IMR-90 (cell line): ENCODE measurements at regions of chr1 and their contacts with region 1.

Region 1: DNA sequence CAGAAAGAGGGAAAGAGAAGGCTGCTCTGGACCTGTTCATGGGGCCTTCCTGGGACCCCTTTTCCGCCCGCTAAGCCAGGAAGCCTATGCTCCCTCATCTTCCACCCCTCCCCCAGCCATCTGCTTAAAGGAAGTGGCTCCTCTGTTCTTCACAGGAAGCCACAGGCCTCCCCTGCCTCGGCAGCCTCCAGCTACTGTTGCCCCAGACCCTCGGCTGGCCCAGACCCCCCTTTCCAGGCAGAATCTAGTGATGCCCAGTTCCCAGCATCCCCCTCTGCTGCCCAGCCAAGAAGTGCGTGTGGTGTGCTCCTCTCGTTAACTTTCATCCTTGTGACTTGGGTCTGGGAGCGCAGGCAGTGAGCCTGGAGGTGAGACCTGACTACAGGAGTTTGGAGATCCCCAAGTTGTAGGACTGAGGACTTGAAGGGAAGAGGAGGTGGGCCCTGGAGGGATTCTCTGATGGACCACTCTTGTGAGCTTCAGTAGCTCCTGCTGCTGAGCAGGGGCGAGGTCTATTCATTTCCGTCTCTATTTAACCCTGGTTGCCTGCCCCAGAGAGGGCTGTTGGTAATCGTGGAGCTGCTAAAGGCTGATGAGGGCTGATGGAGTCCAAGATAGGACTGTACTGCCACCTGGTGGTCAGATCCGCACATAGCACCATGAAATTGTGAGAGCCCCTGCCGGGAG is 9.1 kb downstream of the IFI6 start:
- DNase-seq: peak; percentile 76
- ATAC-seq: peak; percentile 86
- H3K4me3 ChIP-seq: no peak overlapping the region
- H3K27ac ChIP-seq: 0 out of 2 replicates have a peak overlapping the region, but pooled peaks have one; percentile 2
- H3K4me1 ChIP-seq: peaks cover 14% of the 10 kb centered on the region
- H3K27me3 ChIP-seq: no peaks in the 10 kb centered on the region
- CTCF ChIP-seq: peak; percentile 92
- POLR2A ChIP-seq: 0 out of 2 replicates have a peak, but pooled peaks have one; percentile 32
- RAD21 ChIP-seq: peak; percentile 89

Region 2: DNA sequence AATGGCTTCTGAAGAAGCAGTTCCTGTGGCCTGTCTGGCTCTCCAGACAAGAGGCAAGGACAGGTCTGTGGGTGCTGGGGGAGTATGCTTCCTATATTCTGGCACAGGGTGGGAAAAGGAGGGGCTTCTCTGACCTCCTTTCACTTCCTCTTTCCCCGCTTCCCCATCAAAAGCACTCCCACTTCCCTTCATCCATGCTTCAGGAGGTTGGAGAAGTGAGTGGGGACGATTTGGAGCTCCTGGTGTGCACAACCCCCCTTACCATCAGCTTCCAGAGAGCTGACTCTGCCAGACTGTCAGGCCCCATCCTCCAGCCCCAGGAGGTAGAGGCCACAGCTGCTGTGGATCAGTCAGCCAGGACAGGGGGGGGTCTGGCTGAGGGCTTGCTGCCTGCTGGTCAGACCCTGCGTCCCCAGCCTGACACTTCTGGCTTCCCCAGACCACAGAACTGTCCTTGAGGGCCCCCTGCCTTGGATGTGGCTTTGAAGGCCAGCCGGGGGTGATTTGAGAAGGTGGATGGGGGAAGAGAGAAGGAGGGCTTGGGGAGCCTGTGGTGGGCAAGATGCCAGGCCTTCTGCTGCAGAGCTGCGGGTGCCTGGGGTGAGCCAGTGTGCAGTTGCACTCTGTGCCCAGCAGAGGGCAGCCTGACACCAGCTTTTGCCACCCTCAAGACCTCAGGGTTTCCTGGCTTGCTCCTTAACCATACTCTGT is 362.4 kb before region 1 on chr1:
- CTCF ChIA-PET with region 1: interaction called, 6 read pairs
- POLR2A ChIA-PET with region 1: no interaction called
- dilution Hi-C with region 1: no loop called
- in situ Hi-C with region 1: no loop called
- intact Hi-C with region 1: loop called (anchors 2 kb)
- DNase-seq: peak; percentile 93
- ATAC-seq: peak; percentile 76
- H3K4me3 ChIP-seq: no peak overlapping the region
- H3K27ac ChIP-seq: peak overlapping the region; percentile 95
- H3K4me1 ChIP-seq: peaks cover 27% of the 10 kb centered on the region
- H3K27me3 ChIP-seq: no peaks in the 10 kb centered on the region
- CTCF ChIP-seq: peak; percentile 98
- POLR2A ChIP-seq: peak; percentile 49; the same call in 1 of the 2 replicates
- RAD21 ChIP-seq: peak; percentile 98

Region 3: DNA sequence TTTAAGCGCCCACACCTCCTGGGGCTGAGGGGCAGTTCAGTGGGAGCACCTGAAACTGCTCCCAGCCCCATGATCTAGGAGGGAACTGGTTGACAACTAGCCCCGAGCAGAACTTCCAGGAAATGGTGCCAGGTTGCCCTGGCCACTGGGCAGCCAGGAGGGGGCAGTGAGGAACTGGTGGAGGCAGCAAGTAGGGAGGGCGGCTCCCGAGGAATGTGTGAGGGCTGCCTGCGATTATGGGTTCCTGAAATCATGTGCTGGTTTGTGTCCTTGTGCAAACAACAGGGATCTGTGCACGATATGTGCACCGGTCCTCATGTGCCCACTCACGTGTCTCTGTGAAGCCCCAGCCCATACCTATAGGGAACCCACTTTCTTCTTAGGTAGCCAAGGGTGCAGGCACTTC is 260.5 kb before region 1 on chr1:
- CTCF ChIA-PET with region 1: no interaction called
- POLR2A ChIA-PET with region 1: no interaction called
- dilution Hi-C with region 1: no loop called
- in situ Hi-C with region 1: no loop called
- intact Hi-C with region 1: no loop called
- DNase-seq: peak; percentile 55
- ATAC-seq: peak; percentile 52
- H3K4me3 ChIP-seq: no peak overlapping the region
- H3K27ac ChIP-seq: no peak overlapping the region
- H3K4me1 ChIP-seq: peaks cover 19% of the 10 kb centered on the region
- H3K27me3 ChIP-seq: no peaks in the 10 kb centered on the region
- CTCF ChIP-seq: peak; percentile 60
- POLR2A ChIP-seq: no peak
- RAD21 ChIP-seq: peak; percentile 65

Region 4: DNA sequence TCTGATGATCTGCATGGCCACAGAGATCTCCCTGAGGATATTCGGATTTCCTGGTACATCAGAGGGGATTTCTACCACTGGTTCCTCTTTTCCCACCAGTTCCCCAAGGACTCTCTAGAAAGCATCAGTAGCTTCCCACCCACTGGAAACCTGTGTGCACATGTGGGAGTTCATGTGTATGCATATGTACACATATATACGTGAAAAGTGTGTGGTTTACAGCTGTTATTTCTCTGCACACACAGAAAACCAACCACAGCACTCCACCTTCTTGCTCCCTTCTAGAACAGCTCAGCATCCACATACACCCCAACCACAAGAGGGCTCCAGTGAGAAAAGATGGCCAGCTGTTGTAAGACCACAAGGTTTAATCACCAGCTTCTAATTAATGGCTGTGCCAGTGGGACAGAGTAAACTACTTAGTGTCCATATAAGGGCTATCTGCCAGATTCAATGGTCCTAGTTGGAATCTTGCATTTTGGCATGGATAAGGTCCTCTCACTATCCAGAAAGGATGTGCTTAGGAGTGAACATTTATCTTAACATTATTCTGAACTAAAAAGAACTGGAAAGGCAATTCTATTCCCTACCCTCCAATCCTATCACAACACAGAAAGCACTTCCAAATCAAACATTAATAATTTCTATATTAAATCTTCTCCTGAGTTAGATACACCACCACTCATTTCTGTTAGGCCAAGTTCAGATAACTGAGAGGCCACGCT is 246.3 kb before region 1 on chr1:
- CTCF ChIA-PET with region 1: no interaction called
- POLR2A ChIA-PET with region 1: no interaction called
- dilution Hi-C with region 1: no loop called
- in situ Hi-C with region 1: loop called (anchors 10 kb)
- intact Hi-C with region 1: no loop called
- DNase-seq: peak; percentile 73
- ATAC-seq: peak; percentile 55
- H3K4me3 ChIP-seq: no peak overlapping the region
- H3K27ac ChIP-seq: no peak overlapping the region
- H3K4me1 ChIP-seq: peaks cover 11% of the 10 kb centered on the region
- H3K27me3 ChIP-seq: no peaks in the 10 kb centered on the region
- CTCF ChIP-seq: peak; percentile 65
- POLR2A ChIP-seq: no peak; the same call in 1 of the 2 replicates
- RAD21 ChIP-seq: peak; percentile 67

Region 5: GRCh38 chr1:27603681-27604578 is 58.9 kb before region 1 on chr1 and contains the start of gene AHDC1:
- CTCF ChIA-PET with region 1: interaction called, 10 read pairs
- POLR2A ChIA-PET with region 1: interaction called, 3 read pairs
- dilution Hi-C with region 1: no loop called
- in situ Hi-C with region 1: no loop called
- intact Hi-C with region 1: loop called (anchors 1 kb)
- DNase-seq: peak; percentile 87
- ATAC-seq: peak; percentile 73
- H3K4me3 ChIP-seq: peak within 1 kb of the TSS; percentile 97
- H3K27ac ChIP-seq: peak within 1 kb of the TSS; percentile 92
- H3K4me1 ChIP-seq: peaks cover 18% of the 10 kb centered on the region
- H3K27me3 ChIP-seq: no peaks in the 10 kb centered on the region
- CTCF ChIP-seq: 0 out of 2 replicates have a peak, but pooled peaks have one; percentile 6
- POLR2A ChIP-seq: peak; percentile 85
- RAD21 ChIP-seq: peak; percentile 28; the same call in 1 of the 2 replicates
- total RNA-seq, gene AHDC1: 1.7 and 2.0 TPM in 2 replicates

Region 6: DNA sequence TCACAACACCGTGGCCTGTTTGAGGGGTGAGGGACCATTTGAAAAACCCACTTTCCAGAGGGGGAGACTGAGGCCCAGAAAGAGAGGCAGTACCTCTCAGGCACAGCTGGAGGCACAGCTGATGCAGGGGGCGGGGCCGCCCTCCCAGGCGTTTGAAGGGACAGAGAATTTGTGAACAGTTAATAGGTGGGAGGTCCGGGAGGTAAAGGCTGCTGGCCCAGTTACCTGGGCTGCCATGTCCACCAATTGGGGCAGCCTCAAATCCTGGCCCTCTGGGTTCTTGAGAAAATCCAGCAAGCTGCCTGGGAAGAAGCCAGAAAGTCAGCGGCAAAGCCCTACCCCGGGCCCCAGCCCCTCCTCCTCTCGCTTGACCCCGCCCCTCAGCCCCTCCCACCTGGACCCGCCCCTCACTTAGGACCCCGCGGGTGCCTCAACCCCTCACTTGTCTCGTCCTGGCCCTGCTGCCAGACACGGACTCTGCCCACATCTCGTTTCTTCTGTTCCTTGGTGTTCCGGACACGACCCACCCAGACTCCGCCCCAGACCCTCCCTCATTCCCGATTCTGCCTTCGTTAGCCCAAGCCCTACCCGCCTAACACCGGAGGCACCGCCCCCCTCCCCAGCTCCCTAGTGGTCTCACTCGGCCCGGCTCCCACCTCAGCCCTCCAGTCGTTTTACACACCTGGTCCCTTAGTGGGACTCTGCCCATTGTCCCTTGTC is 48.1 kb before region 1 on chr1:
- CTCF ChIA-PET with region 1: no interaction called
- POLR2A ChIA-PET with region 1: no interaction called
- dilution Hi-C with region 1: no loop called
- in situ Hi-C with region 1: loop called (anchors 5 kb)
- intact Hi-C with region 1: no loop called
- DNase-seq: no peak
- ATAC-seq: no peak
- H3K4me3 ChIP-seq: no peak overlapping the region
- H3K27ac ChIP-seq: no peak overlapping the region
- H3K4me1 ChIP-seq: no peaks in the 10 kb centered on the region
- H3K27me3 ChIP-seq: peaks cover 42% of the 10 kb centered on the region
- CTCF ChIP-seq: no peak
- POLR2A ChIP-seq: no peak
- RAD21 ChIP-seq: no peak

Region 7: DNA sequence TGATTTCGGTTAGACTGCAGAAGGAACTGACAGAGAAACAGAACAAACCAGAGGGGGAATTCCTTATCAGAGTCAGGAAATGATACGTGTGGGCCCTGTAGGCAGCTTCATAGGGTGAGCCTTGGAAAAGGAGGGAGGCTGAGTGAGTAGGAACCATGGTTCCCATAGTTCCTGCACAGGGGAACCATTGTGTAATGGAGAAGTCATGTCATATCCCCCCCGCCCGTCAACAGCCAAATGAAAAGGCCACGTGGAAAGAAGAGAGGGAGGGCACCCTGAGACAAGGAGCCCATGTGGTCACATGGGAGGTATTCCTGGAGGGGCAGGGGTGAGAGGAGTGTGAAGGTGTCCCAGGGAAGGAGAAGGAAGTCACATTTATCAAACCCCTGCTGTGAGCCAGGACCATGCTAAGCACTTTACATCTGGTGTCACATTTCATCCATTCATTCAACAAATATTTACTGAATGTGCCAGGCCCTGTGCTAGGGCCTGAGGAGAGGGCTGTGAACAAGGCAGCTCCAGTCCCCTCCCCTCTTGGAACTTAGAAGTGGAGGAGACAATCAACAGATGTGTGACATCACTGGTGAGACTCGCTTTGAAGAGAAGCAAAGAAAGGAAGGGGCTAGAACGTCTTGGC is 12.2 kb before region 1 on chr1:
- CTCF ChIA-PET with region 1: interaction called, 11 read pairs
- POLR2A ChIA-PET with region 1: no interaction called
- dilution Hi-C with region 1: no loop called
- in situ Hi-C with region 1: no loop called
- intact Hi-C with region 1: no loop called
- DNase-seq: peak; percentile 70
- ATAC-seq: peak; percentile 76
- H3K4me3 ChIP-seq: no peak overlapping the region
- H3K27ac ChIP-seq: no peak overlapping the region
- H3K4me1 ChIP-seq: peaks cover 4% of the 10 kb centered on the region
- H3K27me3 ChIP-seq: peaks cover 4% of the 10 kb centered on the region; the same call in 1 of the 2 replicates
- CTCF ChIP-seq: no peak
- POLR2A ChIP-seq: no peak
- RAD21 ChIP-seq: no peak

Region 8: DNA sequence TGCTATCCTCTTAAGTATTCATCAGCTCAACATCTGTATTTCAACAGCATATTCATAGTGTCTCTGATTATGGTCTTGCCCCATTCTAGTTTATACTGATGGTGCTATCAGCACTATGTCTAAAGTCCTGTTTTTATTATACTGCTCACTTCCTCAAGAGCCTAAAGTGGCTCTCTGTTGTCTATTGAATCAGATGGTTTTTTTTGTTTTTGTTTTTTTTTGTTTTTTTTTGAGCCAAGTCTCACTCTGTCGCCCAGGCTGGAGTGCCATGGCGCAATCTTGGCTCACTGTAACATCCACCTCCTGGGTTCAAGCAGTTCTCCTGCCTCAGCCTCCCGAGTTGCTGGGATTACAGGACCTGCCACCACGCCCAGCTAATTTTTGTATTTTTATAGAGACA is 116.3 kb after region 1 on chr1:
- CTCF ChIA-PET with region 1: no interaction called
- POLR2A ChIA-PET with region 1: no interaction called
- dilution Hi-C with region 1: no loop called
- in situ Hi-C with region 1: no loop called
- intact Hi-C with region 1: no loop called
- DNase-seq: no peak
- ATAC-seq: no peak
- H3K4me3 ChIP-seq: no peak overlapping the region
- H3K27ac ChIP-seq: no peak overlapping the region
- H3K4me1 ChIP-seq: peaks cover 4% of the 10 kb centered on the region; the same call in 1 of the 2 replicates
- H3K27me3 ChIP-seq: no peaks in the 10 kb centered on the region
- CTCF ChIP-seq: no peak
- POLR2A ChIP-seq: no peak
- RAD21 ChIP-seq: no peak